Ascending aorta (tissue), 2 donors: ENCODE measurements at regions of chr5 and their contacts with region 1.

Region 1: DNA sequence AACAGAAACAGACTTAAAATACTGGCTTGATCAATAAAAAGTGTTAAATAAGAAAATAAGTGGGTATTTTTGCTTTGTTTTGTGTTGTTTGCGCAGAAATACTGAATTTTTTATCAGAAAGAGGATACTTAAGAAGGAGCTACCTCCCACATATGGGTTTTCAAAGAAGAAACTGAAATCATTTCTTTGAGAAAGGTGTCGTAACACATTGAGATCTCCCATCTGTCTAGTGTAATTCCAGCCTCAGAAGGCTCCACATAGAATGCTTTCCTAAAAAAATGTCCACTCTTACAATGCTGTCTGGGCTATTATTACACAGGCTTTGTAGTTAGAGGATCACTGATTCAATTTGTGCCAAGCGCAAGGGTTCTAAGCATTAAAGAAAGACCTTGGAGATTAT is 226.2 kb downstream of the EPB41L4A start:
- DNase-seq: no peak
- H3K4me3 ChIP-seq: no peak overlapping the region
- H3K27ac ChIP-seq: no peak overlapping the region
- H3K4me1 ChIP-seq: no peaks in the 10 kb centered on the region
- H3K27me3 ChIP-seq: no peaks in the 10 kb centered on the region
- CTCF ChIP-seq: no peak

Region 2: GRCh38 chr5:110757118-110757729 is 1435.6 kb before region 1 on chr5:
- intact Hi-C with region 1: no loop called
- DNase-seq: no peak
- H3K4me3 ChIP-seq: no peak overlapping the region
- H3K27ac ChIP-seq: no peak overlapping the region
- H3K4me1 ChIP-seq: no peaks in the 10 kb centered on the region
- H3K27me3 ChIP-seq: no peaks in the 10 kb centered on the region
- CTCF ChIP-seq: peak; percentile 28 to 64 (median 58)

Region 3: DNA sequence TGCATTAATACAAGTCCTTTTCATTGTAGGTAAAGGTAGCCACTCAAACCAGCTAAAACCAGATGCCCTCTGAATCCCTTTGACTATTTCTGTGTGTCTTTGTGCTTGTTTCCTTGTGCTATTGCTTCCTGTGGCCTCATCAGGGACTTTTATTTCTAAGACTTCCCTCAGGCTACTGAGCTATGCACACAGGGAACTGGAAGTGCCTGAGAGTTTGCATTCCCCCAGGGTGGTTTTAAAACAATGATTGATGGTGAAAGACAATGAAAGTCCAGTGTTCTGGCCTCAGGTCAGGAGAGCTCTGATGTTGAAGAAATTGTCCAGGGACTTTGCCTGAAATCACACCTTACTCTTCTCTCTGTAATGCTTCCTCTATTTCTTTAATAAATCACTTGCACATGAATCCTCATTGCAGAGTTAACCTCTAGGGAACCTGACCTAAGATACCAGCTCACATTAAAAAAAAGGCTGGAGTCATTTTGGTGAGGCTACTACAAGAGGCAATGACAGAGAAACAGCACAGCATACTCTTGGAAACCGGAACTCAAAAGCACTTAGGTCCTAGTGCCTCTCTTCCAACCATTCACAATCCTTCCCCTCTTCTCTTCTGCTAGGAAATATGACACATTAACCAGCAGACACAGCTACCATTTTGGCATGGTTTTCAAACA is 277.8 kb before region 1 on chr5:
- intact Hi-C with region 1: no loop called
- DNase-seq: no peak
- H3K4me3 ChIP-seq: no peak overlapping the region
- H3K27ac ChIP-seq: no peak overlapping the region
- H3K4me1 ChIP-seq: no peaks in the 10 kb centered on the region
- H3K27me3 ChIP-seq: no peaks in the 10 kb centered on the region
- CTCF ChIP-seq: no peak

Region 4: GRCh38 chr5:112174959-112175594 is 17.8 kb before region 1 on chr5:
- intact Hi-C with region 1: loop called (anchors 1 kb)
- DNase-seq: no peak
- H3K4me3 ChIP-seq: no peak overlapping the region
- H3K27ac ChIP-seq: no peak overlapping the region
- H3K4me1 ChIP-seq: no peaks in the 10 kb centered on the region
- H3K27me3 ChIP-seq: no peaks in the 10 kb centered on the region
- CTCF ChIP-seq: peak in 2 of 3 experiments; percentile 37 to 63